ENCODE measurements at regions of chr14 and their contacts with region 1.

Region 1: DNA sequence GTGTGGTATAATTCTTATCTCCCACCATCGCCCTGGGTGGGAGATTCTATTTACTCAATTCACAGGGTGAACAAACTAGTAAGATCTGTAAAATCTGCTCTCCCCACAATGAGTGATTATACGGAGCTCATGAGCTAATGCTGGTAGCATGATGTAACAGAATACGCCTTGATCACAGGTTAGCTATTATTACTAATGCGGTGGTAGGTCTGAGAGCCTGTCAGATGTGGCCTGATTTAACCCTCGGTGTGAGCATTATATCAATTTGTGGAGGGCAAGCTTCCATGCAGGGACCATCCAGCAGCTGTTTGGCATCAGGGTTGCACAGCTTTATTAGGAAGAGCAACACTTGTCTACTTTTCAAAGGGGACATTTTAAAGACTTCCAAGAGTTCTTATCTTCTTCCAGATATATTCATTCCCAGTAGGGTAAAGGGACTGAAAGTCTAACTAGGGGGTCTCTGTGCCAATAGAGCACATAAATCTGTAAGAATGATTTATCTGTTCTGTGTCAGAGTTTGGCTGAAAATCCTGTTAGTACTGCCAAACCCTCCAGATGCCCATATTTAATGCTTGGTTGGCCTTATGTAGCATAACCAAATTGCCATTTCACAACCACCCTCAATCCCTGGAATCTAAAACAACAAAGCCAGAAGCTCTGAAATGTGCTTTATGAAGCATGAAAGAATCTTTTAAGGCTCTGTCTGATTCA is 18.7 kb downstream of the TSHR start:
- DNase-seq: peak in 1 of 5 donors; percentile 40
- H3K4me3 ChIP-seq: no peak overlapping the region
- H3K4me3 Mint-ChIP-seq: peak overlapping the region in 5 of 7 donors; percentile 1 to 55 (median 35)
- H3K27ac ChIP-seq: no peak overlapping the region
- H3K27ac Mint-ChIP-seq: peak overlapping the region in 6 of 8 donors; percentile 15 to 91 (median 48)
- H3K4me1 ChIP-seq: peaks cover 5% of the 10 kb centered on the region
- H3K4me1 Mint-ChIP-seq: peaks cover 24 to 48% (median 31%) of the 10 kb centered on the region in 3 donors
- H3K27me3 ChIP-seq: no peaks in the 10 kb centered on the region
- H3K27me3 Mint-ChIP-seq: no peaks in the 10 kb centered on the region

Region 2: DNA sequence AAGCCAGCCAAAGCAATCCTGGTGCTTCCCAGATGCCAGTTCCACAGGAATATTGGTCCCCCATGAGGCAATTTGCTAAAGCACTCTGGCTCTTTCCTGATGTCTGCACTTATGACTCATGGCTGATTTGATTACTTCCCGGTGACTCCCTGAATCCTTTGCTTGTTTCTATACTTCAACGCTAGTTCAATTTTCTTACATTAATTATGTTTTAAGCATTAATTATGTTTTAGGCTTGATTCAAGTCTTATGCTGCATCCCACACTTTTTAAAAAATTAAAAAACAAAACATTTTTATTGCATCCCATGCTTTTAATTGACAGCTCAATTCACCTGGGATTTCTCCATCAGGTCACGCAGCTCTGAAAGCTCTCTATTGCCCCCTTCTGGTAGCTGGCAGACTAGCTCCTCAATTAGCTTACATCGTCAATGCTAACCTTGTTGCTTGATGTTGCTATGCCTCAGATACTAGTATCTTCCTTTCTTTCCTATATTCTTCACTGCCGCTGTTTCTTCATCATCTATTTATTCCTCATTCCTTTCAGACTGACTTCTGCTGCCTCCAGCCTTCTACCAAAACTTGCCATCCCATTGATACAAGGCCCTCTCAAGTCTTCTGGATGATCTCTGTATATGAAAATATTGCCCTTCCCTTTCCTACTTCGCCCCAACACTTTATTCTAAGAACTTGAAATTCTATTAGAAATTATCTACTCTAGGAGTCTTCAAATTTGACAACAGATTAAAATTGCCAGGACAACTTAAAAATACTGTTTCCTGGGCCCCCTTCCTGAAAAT is 13.3 kb after region 1 on chr14:
- CTCF ChIA-PET with region 1: interaction called, 32 read pairs
- POLR2A ChIA-PET with region 1: no interaction called
- DNase-seq: peak; percentile 43 to 75 (median 51)
- H3K4me3 ChIP-seq: no peak overlapping the region
- H3K4me3 Mint-ChIP-seq: no peak overlapping the region
- H3K27ac ChIP-seq: no peak overlapping the region
- H3K27ac Mint-ChIP-seq: no peak overlapping the region
- H3K4me1 ChIP-seq: no peaks in the 10 kb centered on the region
- H3K4me1 Mint-ChIP-seq: no peaks in the 10 kb centered on the region
- H3K27me3 ChIP-seq: peaks cover 4% of the 10 kb centered on the region
- H3K27me3 Mint-ChIP-seq: peaks cover 3 to 7% of the 10 kb centered on the region in 2 donors

Region 3: GRCh38 chr14:81018251-81018650 is 44.2 kb after region 1 on chr14:
- CTCF ChIA-PET with region 1: no interaction called
- POLR2A ChIA-PET with region 1: no interaction called
- DNase-seq: no peak
- H3K4me3 ChIP-seq: no peak overlapping the region
- H3K4me3 Mint-ChIP-seq: no peak overlapping the region
- H3K27ac ChIP-seq: no peak overlapping the region
- H3K27ac Mint-ChIP-seq: no peak overlapping the region
- H3K4me1 ChIP-seq: no peaks in the 10 kb centered on the region
- H3K4me1 Mint-ChIP-seq: no peaks in the 10 kb centered on the region
- H3K27me3 ChIP-seq: no peaks in the 10 kb centered on the region
- H3K27me3 Mint-ChIP-seq: peaks cover 4 to 59% of the 10 kb centered on the region in 2 donors

Region 4: GRCh38 chr14:81028461-81028860 is 54.4 kb after region 1 on chr14:
- CTCF ChIA-PET with region 1: no interaction called
- POLR2A ChIA-PET with region 1: no interaction called
- DNase-seq: no peak
- H3K4me3 ChIP-seq: no peak overlapping the region
- H3K4me3 Mint-ChIP-seq: no peak overlapping the region
- H3K27ac ChIP-seq: no peak overlapping the region
- H3K27ac Mint-ChIP-seq: no peak overlapping the region
- H3K4me1 ChIP-seq: no peaks in the 10 kb centered on the region
- H3K4me1 Mint-ChIP-seq: peaks cover 0 to 2% (median 0%) of the 10 kb centered on the region in 3 donors
- H3K27me3 ChIP-seq: no peaks in the 10 kb centered on the region
- H3K27me3 Mint-ChIP-seq: peaks cover 12 to 29% of the 10 kb centered on the region in 2 donors